ENCODE measurements at regions of chr1 and their contacts with region 1.

Region 1: GRCh38 chr1:169485544-169486278 is at the start of gene SLC19A2:
- DNase-seq: peak; percentile 100
- ATAC-seq: peak; percentile 72 to 75
- H3K4me3 ChIP-seq: peak within 1 kb of the TSS; percentile 75 to 94 (median 83)
- H3K27ac ChIP-seq: peak within 1 kb of the TSS; percentile 96 to 99 (median 98)
- H3K4me1 ChIP-seq: peaks cover 33 to 47% of the 10 kb centered on the region in 2 donors
- H3K27me3 ChIP-seq: no peaks in the 10 kb centered on the region
- CTCF ChIP-seq: peak in 2 of 5 experiments; percentile 36 to 44
- POLR2A ChIP-seq: peak; percentile 91 to 99
- total RNA-seq, gene SLC19A2: 93.3 to 176 (median 99.8) TPM

Region 2: DNA sequence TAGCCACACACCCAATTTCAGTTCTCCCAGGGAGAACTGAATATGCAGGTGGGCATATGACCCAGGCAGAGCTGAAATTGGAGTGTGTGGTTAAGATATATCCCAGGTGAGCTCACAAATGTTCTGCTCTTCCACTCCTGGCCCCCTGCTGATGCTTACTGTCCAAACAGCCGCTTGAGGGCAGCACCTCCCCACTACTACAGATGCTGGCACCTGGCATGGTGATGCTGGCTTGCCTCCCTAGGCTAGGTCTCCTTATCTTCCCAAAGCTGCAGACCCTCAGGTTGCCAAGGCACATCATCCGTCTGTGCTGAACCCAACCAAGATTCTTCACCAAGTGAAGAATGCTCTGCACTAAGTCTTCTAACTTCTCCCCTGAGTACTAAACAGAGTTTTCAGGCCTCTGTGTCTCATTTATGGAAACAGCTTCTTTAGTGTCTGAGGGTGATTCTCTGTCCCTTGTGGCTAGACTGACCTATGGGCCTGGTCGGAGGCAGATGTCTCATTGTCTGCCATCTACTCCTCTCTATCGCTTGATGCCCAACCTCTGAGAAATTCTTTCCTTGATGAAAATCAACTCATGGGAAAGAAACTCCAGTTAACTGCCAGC is 882.1 kb before region 1 on chr1:
- in situ Hi-C with region 1: loop called in 2 of 4 experiments (anchors 10 to 25 kb)
- intact Hi-C with region 1: loop called (anchors 2 kb)
- DNase-seq: peak; percentile 68 to 79
- ATAC-seq: peak; percentile 53 to 69
- H3K4me3 ChIP-seq: no peak overlapping the region
- H3K27ac ChIP-seq: peak overlapping the region; percentile 17 to 100 (median 56)
- H3K4me1 ChIP-seq: peaks cover 28 to 32% of the 10 kb centered on the region in 2 donors
- H3K27me3 ChIP-seq: no peaks in the 10 kb centered on the region
- CTCF ChIP-seq: peak; percentile 86 to 93 (median 87)
- POLR2A ChIP-seq: no peak

Region 3: GRCh38 chr1:168637350-168637991 is 848.2 kb before region 1 on chr1:
- in situ Hi-C with region 1: loop called in 2 of 4 experiments (anchors 10 to 25 kb)
- intact Hi-C with region 1: loop called (anchors 5 kb)
- DNase-seq: peak in 1 of 2 donors; percentile 30
- ATAC-seq: peak; percentile 60 to 79
- H3K4me3 ChIP-seq: peak overlapping the region in 1 of 4 donors; percentile 9
- H3K27ac ChIP-seq: peak overlapping the region; percentile 88 to 100 (median 94)
- H3K4me1 ChIP-seq: peaks cover 23 to 47% of the 10 kb centered on the region in 2 donors
- H3K27me3 ChIP-seq: no peaks in the 10 kb centered on the region
- CTCF ChIP-seq: peak; percentile 61 to 84 (median 77)
- POLR2A ChIP-seq: peak in 1 of 2 donors; percentile 12

Region 4: DNA sequence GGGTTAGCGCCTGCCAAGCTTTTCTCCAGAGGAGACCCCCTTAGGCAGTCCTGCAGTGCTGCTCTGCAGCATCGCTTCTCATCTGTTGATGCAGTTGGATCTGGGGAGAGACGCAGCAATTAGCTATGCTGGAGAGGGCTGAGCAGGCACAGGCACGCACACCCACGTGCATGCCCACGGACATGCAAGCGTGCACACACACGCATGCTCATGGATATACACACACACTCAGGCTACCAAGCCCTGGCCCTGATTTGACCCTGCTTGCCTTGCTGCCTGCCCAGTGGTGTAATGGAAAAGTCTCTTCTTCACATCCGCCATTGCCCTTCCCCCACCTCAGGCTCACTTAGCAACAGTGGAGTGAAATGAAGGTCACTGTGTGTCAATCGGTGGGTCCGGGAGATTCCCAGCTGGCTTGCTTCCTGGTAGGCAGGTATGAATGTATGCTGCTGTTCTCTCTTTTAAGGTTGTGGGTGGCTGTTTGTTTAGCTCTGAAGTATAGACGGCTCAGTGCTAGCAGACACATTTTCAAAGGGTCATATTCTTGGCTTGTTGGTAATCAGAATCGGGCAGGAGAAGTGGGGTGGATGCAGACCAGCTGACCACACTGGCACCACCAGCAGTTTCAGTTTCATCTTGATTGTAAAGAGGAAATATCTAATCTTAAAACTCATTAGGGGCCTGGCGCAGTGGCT is 369.7 kb before region 1 on chr1:
- in situ Hi-C with region 1: loop called (anchors 5 to 25 kb)
- intact Hi-C with region 1: loop called (anchors 1 kb)
- DNase-seq: peak in 1 of 2 donors; percentile 89
- ATAC-seq: peak in 1 of 2 donors; percentile 37
- H3K4me3 ChIP-seq: peak overlapping the region in 3 of 4 donors; percentile 12 to 35 (median 26)
- H3K27ac ChIP-seq: peak overlapping the region; percentile 93 to 99 (median 96)
- H3K4me1 ChIP-seq: peaks cover 95 to 97% of the 10 kb centered on the region in 2 donors
- H3K27me3 ChIP-seq: no peaks in the 10 kb centered on the region
- CTCF ChIP-seq: no peak
- POLR2A ChIP-seq: no peak

Region 5: DNA sequence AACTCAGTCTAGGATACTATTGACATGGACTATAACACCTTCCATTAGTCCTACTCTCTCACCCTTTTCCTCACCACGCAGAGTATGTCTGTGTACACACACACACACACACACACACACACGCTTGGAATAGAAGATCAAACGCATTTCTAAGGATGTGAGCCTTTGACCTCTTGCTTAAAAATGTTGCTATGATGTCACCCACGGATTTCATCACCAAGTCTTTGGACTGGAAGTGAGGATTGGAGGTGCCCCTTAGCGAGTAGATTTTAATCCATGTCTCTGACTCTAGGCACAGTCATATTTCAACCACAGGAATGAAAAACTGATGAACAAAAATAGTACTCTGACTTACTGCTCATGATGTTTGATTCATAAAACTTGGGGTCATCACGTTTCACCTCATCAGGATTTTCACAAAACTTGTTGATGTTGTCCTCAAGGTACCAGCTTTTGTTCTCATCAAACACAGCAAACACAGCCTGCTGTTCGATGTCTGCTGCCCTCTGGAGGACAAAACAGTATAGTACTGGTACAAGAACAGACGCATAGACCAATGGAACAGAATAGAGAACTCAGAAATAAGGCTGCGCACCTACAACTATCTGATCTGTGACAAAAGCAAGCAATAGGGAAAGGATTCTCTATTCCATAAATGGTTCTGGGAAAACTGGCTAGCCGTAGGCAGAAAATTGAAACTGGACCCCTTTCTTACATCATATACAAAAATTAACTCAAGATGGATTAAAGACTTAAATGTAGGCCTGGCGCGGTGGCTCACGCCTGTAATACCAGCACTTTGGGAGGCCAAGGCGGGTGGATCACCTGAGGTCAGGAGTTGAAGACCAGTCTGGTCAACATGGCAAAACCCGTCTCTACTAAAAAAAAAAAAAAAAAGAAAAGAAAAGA is 60.6 kb after region 1 on chr1:
- in situ Hi-C with region 1: loop called in 1 of 4 experiments (anchors 5 kb)
- intact Hi-C with region 1: loop called (anchors 5 kb)
- DNase-seq: peak; percentile 34 to 38
- ATAC-seq: peak; percentile 84 to 94
- H3K4me3 ChIP-seq: no peak overlapping the region
- H3K27ac ChIP-seq: no peak overlapping the region
- H3K4me1 ChIP-seq: no peaks in the 10 kb centered on the region
- H3K27me3 ChIP-seq: no peaks in the 10 kb centered on the region
- CTCF ChIP-seq: peak; percentile 77 to 85 (median 80)
- POLR2A ChIP-seq: no peak

Measured in gastrocnemius medialis (tissue), 4 donors.